RWPE1 (cell line): ENCODE measurements at regions of chr16 and their contacts with region 1.

Region 1: GRCh38 chr16:1705688-1706385 is at the start of gene MAPK8IP3:
- DNase-seq: peak; percentile 95
- H3K27ac ChIP-seq: peak within 1 kb of the TSS; percentile 93
- CTCF ChIP-seq: peak; percentile 95

Region 2: GRCh38 chr16:1677802-1678496 is 27.9 kb before region 1 on chr16 and contains the start of gene JPT2:
- CTCF ChIA-PET with region 1: interaction called, 14 read pairs
- POLR2A ChIA-PET with region 1: interaction called, 5 read pairs
- DNase-seq: peak; percentile 98
- H3K27ac ChIP-seq: peak within 1 kb of the TSS; percentile 89
- CTCF ChIP-seq: no peak

Region 3: GRCh38 chr16:1691276-1691675 is 14.6 kb before region 1 on chr16:
- CTCF ChIA-PET with region 1: interaction called, 17 read pairs
- POLR2A ChIA-PET with region 1: interaction called, 4 read pairs
- DNase-seq: peak; percentile 29
- H3K27ac ChIP-seq: peak overlapping the region; percentile 96
- CTCF ChIP-seq: no peak

Region 4: DNA sequence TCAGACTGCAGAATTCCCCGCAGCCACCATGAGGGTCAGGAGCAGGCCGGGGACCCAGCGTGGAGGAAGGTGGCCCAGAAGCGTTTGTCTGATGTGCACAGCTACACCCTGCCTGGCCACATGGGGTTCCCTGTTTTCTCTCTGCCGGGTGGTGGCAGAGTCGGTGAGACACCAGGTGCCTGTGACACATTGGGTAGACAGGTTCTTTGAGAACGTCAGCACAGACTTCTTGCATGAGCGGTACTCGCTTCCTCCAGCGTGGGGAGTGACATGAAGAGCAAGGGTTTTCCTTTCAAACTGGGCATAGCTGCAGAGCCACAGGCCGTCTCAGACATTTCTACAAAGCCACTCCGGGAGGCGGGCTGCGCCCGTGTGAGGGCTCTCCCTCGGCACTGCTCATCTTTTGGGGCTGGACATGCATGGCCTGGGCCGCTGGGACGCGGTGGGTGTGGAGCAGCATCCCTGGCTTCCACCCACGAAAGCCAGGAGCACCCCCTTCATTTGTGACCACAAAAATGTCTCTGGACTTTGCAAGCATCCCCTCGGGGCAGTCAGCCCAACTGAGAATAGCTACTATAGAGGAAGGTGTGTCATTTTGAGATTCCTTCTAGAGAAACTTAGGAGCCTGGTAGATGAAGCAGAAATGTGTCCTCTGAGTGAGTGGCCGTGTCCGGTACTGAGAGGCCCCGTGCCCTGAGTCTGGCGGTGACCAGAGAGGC is 39.5 kb after region 1 on chr16:
- CTCF ChIA-PET with region 1: interaction called, 11 read pairs
- POLR2A ChIA-PET with region 1: interaction called, 4 read pairs
- DNase-seq: peak; percentile 69
- H3K27ac ChIP-seq: peak overlapping the region; percentile 48
- CTCF ChIP-seq: no peak

Region 5: DNA sequence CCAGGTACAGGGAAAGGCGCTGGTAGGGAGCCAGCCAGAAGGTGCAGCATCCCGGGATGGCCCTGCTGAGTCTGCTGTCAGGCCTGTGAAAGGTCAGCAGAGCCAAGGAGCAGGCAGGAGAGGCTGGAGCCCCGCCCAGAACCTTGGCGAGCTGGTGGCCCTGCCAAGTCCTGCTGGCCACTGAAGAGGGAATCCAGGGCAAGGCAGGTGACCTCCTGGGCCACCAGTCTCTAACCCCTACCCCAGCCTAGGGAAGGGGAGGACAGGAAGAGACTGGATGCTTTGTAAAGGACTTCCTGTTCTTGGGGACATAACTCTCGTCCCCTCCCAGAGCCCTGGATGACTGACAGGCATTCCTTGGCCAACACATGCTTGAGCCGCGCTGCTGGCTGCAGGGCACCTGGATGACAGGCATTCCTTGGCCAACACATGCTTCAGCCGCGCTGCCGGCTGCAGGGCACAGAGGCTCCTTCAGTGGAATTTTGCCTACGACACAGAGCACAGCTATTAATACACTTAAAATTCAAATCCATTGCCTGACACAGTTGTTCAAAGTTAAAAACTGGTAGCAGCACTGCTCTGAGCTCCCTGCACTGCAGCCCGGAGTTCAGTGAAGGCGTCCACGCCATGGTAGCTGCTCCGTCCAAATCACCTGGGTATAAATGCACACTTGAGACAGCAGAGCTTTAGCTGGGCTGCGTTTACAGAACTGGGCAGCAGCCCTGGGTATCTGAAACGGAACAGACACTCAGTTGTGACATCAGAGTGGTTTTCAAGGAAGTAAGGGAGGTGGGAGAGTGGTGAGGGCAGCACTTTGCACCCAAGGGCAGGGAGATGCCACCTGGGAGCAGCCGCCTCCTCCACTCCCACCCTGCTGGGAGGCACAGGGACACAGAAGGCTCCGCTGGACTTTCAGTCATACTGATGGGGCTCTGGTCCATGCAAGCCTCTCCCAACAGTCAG is 506.8 kb after region 1 on chr16:
- CTCF ChIA-PET with region 1: interaction called, 10 read pairs
- POLR2A ChIA-PET with region 1: no interaction called
- DNase-seq: no peak
- H3K27ac ChIP-seq: peak overlapping the region; percentile 93
- CTCF ChIP-seq: no peak